ENCODE measurements at regions of chr3 and their contacts with region 1.

Region 1: GRCh38 chr3:188262913-188263683 is 109.1 kb downstream of the LPP start:
- DNase-seq: no peak
- ATAC-seq: peak; percentile 65

Region 2: DNA sequence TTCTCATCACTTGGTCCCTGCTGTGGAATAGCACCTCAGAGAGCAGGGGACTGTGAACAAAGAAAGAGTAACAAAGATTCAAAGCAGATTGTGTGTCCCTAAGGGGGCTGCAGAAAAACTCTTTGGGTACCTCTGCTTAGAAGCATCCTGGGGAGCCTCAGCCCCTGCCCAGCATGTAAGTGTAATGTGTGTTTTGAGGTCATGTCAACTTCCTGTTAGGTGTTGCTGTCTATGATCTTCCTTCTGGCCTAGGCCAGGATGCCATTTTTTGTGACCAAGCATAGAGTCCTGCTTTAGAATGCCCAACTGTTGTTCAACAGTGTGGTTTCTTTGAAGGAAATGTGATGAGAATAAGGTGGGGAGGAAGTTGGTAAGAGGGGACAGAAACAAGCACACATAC is 440.7 kb before region 1 on chr3:
- intact Hi-C with region 1: no loop called
- DNase-seq: peak; percentile 53
- ATAC-seq: no peak

Region 3: DNA sequence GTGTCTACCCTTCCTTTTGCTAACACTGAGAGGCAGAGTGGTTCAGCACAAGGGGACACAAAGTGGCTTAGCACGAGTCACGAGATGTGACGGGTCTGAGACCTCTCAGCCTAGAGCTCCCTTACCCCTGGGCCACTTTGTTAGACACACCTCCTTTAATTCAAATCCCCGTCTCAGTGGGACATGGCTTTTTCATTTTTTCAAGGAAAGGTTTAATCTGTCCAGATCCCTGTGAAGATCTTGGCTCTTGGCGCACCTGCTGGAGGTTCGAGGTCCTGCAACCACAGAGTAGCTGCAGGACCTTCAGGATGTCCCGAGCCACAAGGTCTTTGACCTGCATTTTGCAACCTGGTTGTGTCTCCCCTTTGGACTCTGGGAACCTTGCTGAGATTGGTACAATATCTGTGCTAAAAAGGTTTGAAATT is 57.1 kb before region 1 on chr3:
- intact Hi-C with region 1: loop called (anchors 2 kb)
- DNase-seq: no peak
- ATAC-seq: no peak

Region 4: DNA sequence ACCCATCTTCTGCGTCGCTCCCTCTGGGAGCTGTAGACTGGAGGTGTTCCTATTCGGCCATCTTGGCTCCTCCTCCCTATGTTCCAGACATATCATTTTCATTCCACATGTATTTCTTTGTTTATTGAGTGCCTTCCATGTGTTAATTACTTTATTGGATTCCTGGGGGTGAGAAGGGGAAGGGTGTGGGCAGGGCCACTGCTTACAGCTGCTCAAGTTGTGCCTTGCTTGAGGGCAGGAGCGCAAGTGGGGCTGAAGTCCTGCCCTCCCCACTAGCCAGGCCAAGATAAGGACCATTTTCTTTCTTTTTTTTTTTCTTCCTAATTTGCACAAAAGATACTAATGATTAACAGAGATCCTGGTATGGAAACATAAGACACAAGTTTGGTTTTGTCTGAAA is 115.7 kb after region 1 on chr3:
- intact Hi-C with region 1: no loop called
- DNase-seq: no peak
- ATAC-seq: no peak